Prostate gland (tissue), 2 donors: ENCODE measurements at regions of chr12 and their contacts with region 1.

Region 1: DNA sequence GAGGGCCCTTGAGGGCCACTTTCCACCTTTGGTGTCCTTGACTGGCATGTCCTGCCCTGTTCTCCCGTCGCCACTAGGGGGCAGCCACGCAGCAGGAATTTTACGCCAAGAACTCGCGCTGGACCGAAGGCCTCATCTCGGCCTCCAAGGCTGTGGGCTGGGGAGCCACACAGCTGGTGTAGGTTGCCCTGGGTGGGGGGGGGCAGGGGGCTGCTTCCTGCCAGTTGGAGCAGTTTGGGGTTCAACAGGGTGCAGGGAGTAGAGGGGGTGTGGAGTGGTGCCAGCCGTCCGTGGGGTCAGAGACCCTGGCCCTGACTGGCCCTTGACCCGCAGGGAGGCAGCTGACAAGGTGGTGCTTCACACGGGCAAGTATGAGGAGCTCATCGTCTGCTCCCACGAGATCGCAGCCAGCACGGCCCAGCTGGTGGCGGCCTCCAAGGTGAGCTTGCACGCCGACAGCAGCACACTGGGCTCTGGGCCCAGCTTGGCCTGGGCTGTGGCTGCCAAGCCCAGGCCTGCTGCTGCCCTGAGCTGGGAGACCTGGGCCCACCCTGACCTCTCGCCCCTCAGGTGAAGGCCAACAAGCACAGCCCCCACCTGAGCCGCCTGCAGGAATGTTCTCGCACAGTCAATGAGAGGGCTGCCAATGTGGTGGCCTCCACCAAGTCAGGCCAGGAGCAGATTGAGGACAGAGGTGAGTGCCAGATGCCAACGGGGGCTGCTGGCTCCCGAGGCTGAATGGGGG is 25.3 kb downstream of the HIP1R start:
- DNase-seq: peak; percentile 79
- H3K4me3 ChIP-seq: no peak overlapping the region
- H3K27ac ChIP-seq: peak overlapping the region; percentile 28 to 47
- H3K4me1 ChIP-seq: peaks cover 8% of the 10 kb centered on the region
- H3K27me3 ChIP-seq: no peaks in the 10 kb centered on the region
- CTCF ChIP-seq: peak; percentile 95 to 99 (median 96)
- POLR2A ChIP-seq: no peak

Region 2: DNA sequence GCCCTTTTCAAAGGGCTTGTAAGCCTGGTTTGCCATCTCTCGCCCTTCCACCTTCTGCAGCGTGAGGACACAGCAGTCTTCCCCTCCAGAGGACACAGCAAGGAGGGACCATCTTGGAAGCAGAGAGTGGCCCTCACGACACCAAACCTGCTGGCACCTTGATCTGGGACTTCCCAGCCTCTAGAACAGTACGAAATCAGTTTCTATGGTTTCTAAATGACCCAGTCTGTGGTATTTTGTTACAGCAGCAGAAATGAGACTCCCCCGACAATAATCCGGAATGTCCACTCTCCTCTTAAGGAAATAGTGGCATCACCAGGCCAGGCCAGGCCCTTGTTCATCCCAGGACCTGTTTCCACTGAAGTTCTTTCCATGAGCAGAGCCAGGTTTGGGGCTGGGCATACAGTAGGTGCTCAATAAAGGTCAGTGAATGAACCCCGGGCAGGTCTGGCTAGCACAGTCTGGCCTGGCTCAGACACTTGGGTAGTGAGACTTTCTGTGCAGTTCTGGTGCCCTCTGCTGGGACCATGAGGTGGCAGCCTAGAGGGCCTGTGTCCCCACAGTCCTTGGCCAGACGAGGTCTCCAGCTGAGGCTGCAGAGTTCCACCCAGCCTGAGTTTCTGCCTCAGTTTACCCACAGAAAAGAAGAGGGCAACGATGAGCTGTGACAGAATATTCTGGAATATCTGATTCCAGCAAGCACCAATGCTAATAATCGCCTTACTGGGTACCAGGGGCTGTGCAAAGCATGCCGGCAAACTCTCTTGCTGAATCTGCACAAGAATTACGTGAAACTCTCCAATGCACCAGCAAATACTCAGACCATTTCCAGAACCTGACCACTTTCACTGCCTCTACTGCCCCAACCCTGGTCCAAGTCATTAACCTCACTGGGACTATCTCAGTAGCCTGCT is 91.7 kb after region 1 on chr12:
- intact Hi-C with region 1: loop called (anchors 1 kb)
- DNase-seq: peak; percentile 77
- H3K4me3 ChIP-seq: no peak overlapping the region
- H3K27ac ChIP-seq: no peak overlapping the region
- H3K4me1 ChIP-seq: no peaks in the 10 kb centered on the region
- H3K27me3 ChIP-seq: no peaks in the 10 kb centered on the region
- CTCF ChIP-seq: peak; percentile 40 to 95 (median 87)
- POLR2A ChIP-seq: no peak